Mucosa of descending colon (tissue), 3 donors: ENCODE measurements at regions of chr1 and their contacts with region 1.

Region 1: DNA sequence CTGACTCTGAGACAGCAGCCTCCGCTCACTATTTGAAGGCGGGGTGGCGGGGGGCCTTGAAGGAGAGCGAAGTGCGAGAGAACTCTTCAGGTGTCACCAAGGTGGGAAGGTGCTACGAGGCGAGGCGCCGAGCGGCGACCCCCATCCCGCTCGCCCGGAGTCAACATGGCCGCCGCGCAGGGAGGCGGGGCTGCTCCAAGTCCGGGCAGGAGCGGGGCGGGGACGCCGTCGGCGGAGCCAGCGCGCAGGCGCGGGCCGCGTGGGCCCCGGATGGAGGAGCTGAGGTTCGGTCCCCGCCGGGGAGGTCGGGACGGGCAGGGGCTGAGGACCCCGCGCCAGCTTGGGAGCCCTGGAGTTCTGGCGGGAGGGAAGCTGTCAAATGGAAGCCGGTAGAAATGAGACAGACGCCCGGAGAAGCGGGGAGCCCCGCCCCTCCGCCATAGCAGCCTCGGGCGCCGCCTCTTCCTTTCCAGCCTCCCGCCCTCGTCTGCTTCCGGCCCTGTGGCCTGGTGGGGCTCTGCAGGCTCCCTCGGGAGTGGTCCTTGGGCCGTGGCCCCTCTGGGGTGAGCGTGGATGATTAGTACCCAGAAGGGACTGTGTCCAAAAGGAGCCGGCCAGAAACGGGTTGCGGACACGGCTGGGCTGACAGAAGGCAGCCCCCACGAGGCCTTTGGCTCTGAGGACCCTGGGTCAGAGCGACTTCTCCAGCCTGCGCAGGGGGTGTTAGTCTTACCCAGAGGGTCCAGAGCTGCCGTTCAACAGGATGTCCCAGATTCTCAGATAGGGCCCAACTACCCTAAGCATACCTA is at the start of gene PIGV:
- DNase-seq: peak; percentile 91 to 93 (median 93)
- ATAC-seq: peak; percentile 89
- H3K4me3 ChIP-seq: peak within 1 kb of the TSS; percentile 64
- H3K4me1 ChIP-seq: peaks cover 47% of the 10 kb centered on the region
- CTCF ChIP-seq: no peak
- total RNA-seq, gene PIGV: 16.5 to 22.3 (median 17.5) TPM

Region 2: GRCh38 chr1:26602378-26602959 is 185.4 kb before region 1 on chr1:
- intact Hi-C with region 1: loop called (anchors 5 kb)
- DNase-seq: peak in 1 of 3 donors; percentile 84
- ATAC-seq: peak; percentile 74
- H3K4me3 ChIP-seq: no peak overlapping the region
- H3K4me1 ChIP-seq: no peaks in the 10 kb centered on the region
- CTCF ChIP-seq: peak; percentile 64

Region 3: GRCh38 chr1:26614655-26615411 is 173.1 kb before region 1 on chr1:
- intact Hi-C with region 1: loop called in 1 of 2 experiments (anchors 5 kb)
- DNase-seq: no peak
- ATAC-seq: no peak
- H3K4me3 ChIP-seq: no peak overlapping the region
- H3K4me1 ChIP-seq: peaks cover 3% of the 10 kb centered on the region
- CTCF ChIP-seq: no peak

Region 4: GRCh38 chr1:26695356-26696118 is 92.4 kb before region 1 on chr1 and contains the start of gene ARID1A:
- intact Hi-C with region 1: loop called (anchors 5 to 10 kb)
- DNase-seq: peak; percentile 95 to 99 (median 97)
- ATAC-seq: peak; percentile 77
- H3K4me3 ChIP-seq: peak within 1 kb of the TSS; percentile 94
- H3K4me1 ChIP-seq: peaks cover 50% of the 10 kb centered on the region
- CTCF ChIP-seq: no peak
- total RNA-seq, gene ARID1A: 59.9 to 81.2 (median 65.4) TPM

Region 5: GRCh38 chr1:26733982-26734381 is 53.9 kb before region 1 on chr1:
- intact Hi-C with region 1: no loop called
- DNase-seq: no peak
- ATAC-seq: no peak
- H3K4me3 ChIP-seq: no peak overlapping the region
- H3K4me1 ChIP-seq: peaks cover 3% of the 10 kb centered on the region
- CTCF ChIP-seq: no peak